ENCODE measurements at regions of chr19 and their contacts with region 1.

Region 1: GRCh38 chr19:51441410-51442390 is 16.6 kb downstream of the SIGLEC8 start:
- DNase-seq: peak; percentile 95
- H3K4me3 Mint-ChIP-seq: peak overlapping the region; percentile 80
- H3K27ac Mint-ChIP-seq: peak overlapping the region; percentile 94
- H3K4me1 Mint-ChIP-seq: peaks cover 52% of the 10 kb centered on the region
- H3K27me3 Mint-ChIP-seq: peaks cover 12% of the 10 kb centered on the region

Region 2: GRCh38 chr19:51338563-51339312 is 103.0 kb before region 1 on chr19:
- intact Hi-C with region 1: loop called (anchors 1 kb)
- DNase-seq: peak; percentile 95
- H3K4me3 Mint-ChIP-seq: peak overlapping the region; percentile 90
- H3K27ac Mint-ChIP-seq: peak overlapping the region; percentile 87
- H3K4me1 Mint-ChIP-seq: peaks cover 20% of the 10 kb centered on the region
- H3K27me3 Mint-ChIP-seq: peaks cover 6% of the 10 kb centered on the region

Region 3: DNA sequence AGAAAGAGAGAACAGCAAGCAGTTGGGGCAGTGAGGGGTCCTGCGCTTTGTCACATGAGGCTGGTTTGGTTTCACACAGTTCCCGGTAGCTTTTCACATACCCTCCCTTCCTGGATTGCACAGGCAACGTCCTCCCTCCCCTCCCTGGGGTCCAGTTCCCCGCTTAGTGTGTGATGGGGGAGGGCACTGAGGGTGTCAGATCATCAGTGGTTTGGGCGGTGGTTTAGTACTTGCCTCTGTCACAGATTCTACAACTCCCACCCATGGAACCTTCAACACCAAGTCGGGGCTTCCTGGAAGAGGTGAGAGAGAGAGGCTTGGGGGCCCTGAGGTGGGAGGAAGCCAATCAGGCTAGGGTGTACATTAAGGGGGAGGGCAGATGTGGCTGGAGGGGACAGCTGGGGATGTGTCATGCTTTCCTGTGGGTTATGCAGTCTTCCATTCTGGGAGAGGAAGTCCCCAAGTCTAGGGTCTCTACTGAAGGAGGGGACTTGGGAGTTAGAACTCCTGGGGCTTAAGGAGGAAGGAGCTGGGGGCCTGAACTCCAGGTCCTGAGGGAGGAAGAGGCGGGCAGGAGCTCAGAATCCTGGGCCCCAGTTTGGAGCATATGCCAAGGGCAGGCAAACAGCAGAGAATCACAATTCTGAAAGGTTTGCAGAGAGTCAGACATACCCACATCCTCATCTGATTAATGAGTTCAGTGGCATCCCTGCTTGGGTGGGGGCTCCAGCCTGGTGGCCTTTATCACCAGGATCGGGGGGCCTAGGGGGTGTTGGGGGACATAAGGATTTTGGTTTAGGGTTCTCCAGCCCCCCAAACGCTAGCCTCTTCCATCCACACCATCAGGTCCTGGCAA is 68.8 kb before region 1 on chr19 and contains the start of gene NKG7:
- intact Hi-C with region 1: loop called (anchors 1 kb)
- DNase-seq: peak; percentile 90
- H3K4me3 Mint-ChIP-seq: peak within 1 kb of the TSS; percentile 98
- H3K27ac Mint-ChIP-seq: peak within 1 kb of the TSS; percentile 98
- H3K4me1 Mint-ChIP-seq: peaks cover 70% of the 10 kb centered on the region
- H3K27me3 Mint-ChIP-seq: no peaks in the 10 kb centered on the region
- total RNA-seq, gene NKG7: 363 and 379 TPM in 2 replicates

Region 4: GRCh38 chr19:51402117-51402516 is 39.6 kb before region 1 on chr19:
- intact Hi-C with region 1: no loop called
- DNase-seq: no peak
- H3K4me3 Mint-ChIP-seq: no peak overlapping the region
- H3K27ac Mint-ChIP-seq: no peak overlapping the region
- H3K4me1 Mint-ChIP-seq: peaks cover 11% of the 10 kb centered on the region
- H3K27me3 Mint-ChIP-seq: no peaks in the 10 kb centered on the region

Region 5: DNA sequence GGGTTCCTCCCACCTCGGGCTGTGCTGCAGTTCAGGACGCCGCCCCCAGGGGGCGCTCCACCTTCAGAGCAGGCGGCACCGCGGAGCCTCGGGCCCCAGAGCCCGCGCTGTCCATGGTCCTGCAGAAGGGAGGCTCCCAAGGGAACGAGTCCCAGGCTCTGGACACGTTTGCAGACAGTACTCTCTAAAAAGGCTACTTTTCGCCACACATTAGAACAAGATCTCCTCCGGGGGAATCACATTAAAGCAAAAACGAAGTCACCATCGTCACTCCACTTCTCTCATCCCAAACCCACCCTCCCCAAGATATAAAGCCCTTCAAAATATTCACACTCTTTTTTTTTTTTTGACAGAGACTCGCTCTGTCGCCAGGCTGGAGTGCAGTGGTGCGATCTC is 19.6 kb before region 1 on chr19:
- intact Hi-C with region 1: loop called (anchors 2 kb)
- DNase-seq: peak; percentile 97
- H3K4me3 Mint-ChIP-seq: peak overlapping the region; percentile 44
- H3K27ac Mint-ChIP-seq: peak overlapping the region; percentile 51
- H3K4me1 Mint-ChIP-seq: peaks cover 15% of the 10 kb centered on the region
- H3K27me3 Mint-ChIP-seq: peaks cover 19% of the 10 kb centered on the region

Region 6: GRCh38 chr19:51479531-51480331 is 38.0 kb after region 1 on chr19:
- intact Hi-C with region 1: loop called (anchors 2 kb)
- DNase-seq: no peak
- H3K4me3 Mint-ChIP-seq: peak overlapping the region; percentile 13
- H3K27ac Mint-ChIP-seq: peak overlapping the region; percentile 71
- H3K4me1 Mint-ChIP-seq: peaks cover 28% of the 10 kb centered on the region
- H3K27me3 Mint-ChIP-seq: peaks cover 2% of the 10 kb centered on the region

Region 7: DNA sequence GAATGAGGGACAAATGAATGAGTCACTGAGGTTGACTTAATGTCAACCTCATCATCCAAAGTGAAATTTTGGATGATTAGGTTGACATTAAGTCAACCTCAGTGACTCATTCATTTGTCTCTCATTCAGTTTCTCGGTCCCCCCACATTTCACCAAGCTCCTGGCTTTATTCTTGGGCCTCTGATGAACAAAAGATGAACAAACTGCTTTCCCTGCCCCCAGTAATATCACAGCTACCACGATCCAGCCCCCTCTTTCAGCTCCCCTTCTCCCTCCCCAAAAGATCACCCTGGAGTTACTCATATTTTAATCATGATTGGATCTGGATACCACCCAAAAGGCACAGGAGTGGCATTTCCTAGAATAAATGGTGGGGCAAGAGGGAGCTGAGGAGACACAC is 47.4 kb after region 1 on chr19:
- intact Hi-C with region 1: loop called (anchors 1 kb)
- DNase-seq: no peak
- H3K4me3 Mint-ChIP-seq: peak overlapping the region; percentile 46
- H3K27ac Mint-ChIP-seq: peak overlapping the region; percentile 83
- H3K4me1 Mint-ChIP-seq: peaks cover 19% of the 10 kb centered on the region
- H3K27me3 Mint-ChIP-seq: no peaks in the 10 kb centered on the region

Region 8: GRCh38 chr19:51501594-51502263 is 60.0 kb after region 1 on chr19 and contains the start of gene SIGLEC12:
- intact Hi-C with region 1: no loop called
- DNase-seq: peak; percentile 71
- H3K4me3 Mint-ChIP-seq: peak within 1 kb of the TSS; percentile 78
- H3K27ac Mint-ChIP-seq: peak within 1 kb of the TSS; percentile 82
- H3K4me1 Mint-ChIP-seq: peaks cover 28% of the 10 kb centered on the region
- H3K27me3 Mint-ChIP-seq: peaks cover 2% of the 10 kb centered on the region
- total RNA-seq, gene SIGLEC12: 0.98 and 1.5 TPM in 2 replicates

Region 9: GRCh38 chr19:51593969-51594773 is 152.5 kb after region 1 on chr19:
- intact Hi-C with region 1: loop called (anchors 1 kb)
- DNase-seq: peak; percentile 99
- H3K4me3 Mint-ChIP-seq: peak overlapping the region; percentile 91
- H3K27ac Mint-ChIP-seq: peak overlapping the region; percentile 84
- H3K4me1 Mint-ChIP-seq: peaks cover 22% of the 10 kb centered on the region
- H3K27me3 Mint-ChIP-seq: no peaks in the 10 kb centered on the region

Measured in activated CD4-positive, alpha-beta T cell treated with anti-CD3 and anti-CD28 coated beads, Interleukin-2, amount 10 ng/mL, durations not matched to agents 24 days and 14 days (primary cell).